ENCODE measurements at regions of chr1 and their contacts with region 1.

Region 1: DNA sequence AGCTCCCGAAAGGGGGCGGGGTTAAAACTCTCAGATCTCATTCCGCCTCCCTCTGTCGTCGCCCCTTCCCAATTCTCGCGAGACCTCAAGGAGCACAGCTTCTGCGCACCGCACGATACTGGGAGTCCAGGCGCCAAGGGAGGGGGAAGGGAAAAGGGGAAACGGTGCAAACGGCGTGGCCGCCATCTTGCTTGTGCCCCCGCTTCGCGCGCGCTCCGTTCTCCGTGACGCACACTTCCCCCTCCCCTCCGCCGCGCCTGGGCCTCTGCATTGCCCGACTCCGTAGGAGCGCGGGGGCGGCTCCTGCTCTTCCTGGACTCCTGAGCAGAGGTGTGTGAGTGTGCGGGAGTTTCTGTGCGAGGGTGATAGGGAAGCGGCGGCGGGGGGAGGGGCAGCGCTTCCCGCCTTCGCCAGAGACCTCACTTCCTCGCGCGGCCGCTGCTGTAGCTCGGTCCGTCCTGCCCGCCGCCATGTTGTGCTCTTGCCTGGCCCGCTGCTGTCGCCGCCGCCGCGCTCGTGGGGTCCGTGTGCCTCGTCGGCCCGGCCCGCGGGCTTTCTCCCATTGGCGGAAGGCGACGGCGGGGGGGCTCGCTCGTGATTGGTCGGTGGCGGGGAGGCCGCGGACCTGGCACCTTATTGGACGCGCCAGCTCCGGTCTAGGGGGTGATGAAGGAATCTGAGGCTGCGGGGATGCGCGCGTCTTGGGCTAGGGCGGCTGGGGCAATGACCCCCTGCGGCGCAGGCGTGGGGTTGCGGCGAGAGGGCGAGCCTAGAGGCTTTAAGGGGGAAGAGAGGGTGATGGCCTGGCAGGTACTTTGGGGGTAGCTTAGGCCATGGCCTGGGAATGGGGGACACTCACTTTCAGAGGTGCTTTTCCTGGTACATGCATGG is at the start of gene NFYC:
- DNase-seq: peak; percentile 94 to 99
- H3K4me3 ChIP-seq: peak within 1 kb of the TSS; percentile 93 to 95
- H3K27ac ChIP-seq: peak within 1 kb of the TSS; percentile 99 to 100
- H3K4me1 ChIP-seq: peaks cover 0 to 16% of the 10 kb centered on the region in 2 donors
- H3K27me3 ChIP-seq: no peaks in the 10 kb centered on the region
- CTCF ChIP-seq: no peak
- total RNA-seq, gene NFYC: 75.9 TPM

Region 2: GRCh38 chr1:40267767-40268187 is 424.0 kb before region 1 on chr1:
- intact Hi-C with region 1: loop called (anchors 5 kb)
- DNase-seq: peak in 1 of 2 donors; percentile 69
- H3K4me3 ChIP-seq: peak overlapping the region in 1 of 2 donors; percentile 11
- H3K27ac ChIP-seq: peak overlapping the region; percentile 81 to 89
- H3K4me1 ChIP-seq: peaks cover 0 to 57% of the 10 kb centered on the region in 2 donors
- H3K27me3 ChIP-seq: no peaks in the 10 kb centered on the region
- CTCF ChIP-seq: no peak

Region 3: DNA sequence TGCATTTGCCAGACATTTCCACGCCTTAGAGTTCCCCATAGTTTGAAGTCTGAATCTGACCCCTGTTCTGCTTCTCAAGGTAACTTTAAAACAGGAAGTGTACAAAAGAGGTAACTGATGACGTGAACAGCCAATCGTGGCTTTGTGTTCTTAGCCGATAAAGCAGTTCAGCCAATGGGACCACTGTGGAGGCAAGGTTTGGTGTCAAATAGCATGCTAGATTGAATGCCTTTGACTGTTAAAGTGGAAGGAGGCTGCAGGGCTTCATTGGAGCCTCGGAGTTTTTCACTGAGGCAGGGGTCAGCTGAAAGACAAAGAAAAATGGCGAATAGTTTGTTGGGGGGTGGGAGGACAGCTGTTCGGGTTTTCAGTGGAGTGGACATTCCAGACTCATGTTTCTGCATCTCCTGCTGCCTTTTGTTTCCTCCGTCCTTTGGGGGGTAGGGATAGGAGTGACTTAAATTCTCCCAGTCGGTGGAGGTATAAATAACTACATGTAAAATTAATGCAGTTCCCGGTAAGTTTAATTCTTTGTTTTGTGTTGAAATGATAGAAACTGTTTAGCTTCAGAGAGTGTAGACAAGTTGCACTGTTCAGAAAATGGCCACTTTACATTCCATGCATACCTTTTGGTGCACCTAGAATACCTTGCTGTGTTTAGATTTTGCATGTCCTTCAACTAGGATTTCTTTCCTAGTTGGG is 17.5 kb after region 1 on chr1:
- intact Hi-C with region 1: loop called (anchors 1 kb)
- DNase-seq: peak; percentile 49 to 92
- H3K4me3 ChIP-seq: peak overlapping the region; percentile 51 to 64
- H3K27ac ChIP-seq: peak overlapping the region; percentile 59 to 73
- H3K4me1 ChIP-seq: peaks cover 4 to 48% of the 10 kb centered on the region in 2 donors
- H3K27me3 ChIP-seq: no peaks in the 10 kb centered on the region
- CTCF ChIP-seq: no peak

Region 4: GRCh38 chr1:40862008-40862863 is 170.5 kb after region 1 on chr1 and contains the start of gene CITED4:
- intact Hi-C with region 1: loop called (anchors 5 kb)
- DNase-seq: peak; percentile 82 to 97
- H3K4me3 ChIP-seq: peak within 1 kb of the TSS; percentile 97
- H3K27ac ChIP-seq: peak within 1 kb of the TSS; percentile 79 to 87
- H3K4me1 ChIP-seq: peaks cover 10 to 25% of the 10 kb centered on the region in 2 donors
- H3K27me3 ChIP-seq: no peaks in the 10 kb centered on the region
- CTCF ChIP-seq: peak in 2 of 3 experiments; percentile 14 to 30
- total RNA-seq, gene CITED4: 47.6 TPM

Region 5: GRCh38 chr1:41496080-41497055 is 804.6 kb after region 1 on chr1:
- intact Hi-C with region 1: loop called (anchors 10 kb)
- DNase-seq: peak; percentile 61 to 95
- H3K4me3 ChIP-seq: peak overlapping the region; percentile 24 to 43
- H3K27ac ChIP-seq: peak overlapping the region; percentile 93 to 97
- H3K4me1 ChIP-seq: peaks cover 27 to 69% of the 10 kb centered on the region in 2 donors
- H3K27me3 ChIP-seq: no peaks in the 10 kb centered on the region
- CTCF ChIP-seq: peak in 2 of 3 experiments; percentile 20 to 37